Right ventricle myocardium inferior (tissue), 1 donor: ENCODE measurements at regions of chr1 and their contacts with region 1.

Region 1: GRCh38 chr1:147172168-147172992 is at the start of gene PRKAB2:
- DNase-seq: peak; percentile 98
- ATAC-seq: peak; percentile 98
- total RNA-seq, gene PRKAB2: 42.0 TPM

Region 2: GRCh38 chr1:147225193-147225730 is 52.9 kb after region 1 on chr1 and contains the start of gene FMO5:
- intact Hi-C with region 1: loop called (anchors 5 kb)
- DNase-seq: peak; percentile 77
- ATAC-seq: peak; percentile 97
- total RNA-seq, gene FMO5: 8.2 TPM

Region 3: DNA sequence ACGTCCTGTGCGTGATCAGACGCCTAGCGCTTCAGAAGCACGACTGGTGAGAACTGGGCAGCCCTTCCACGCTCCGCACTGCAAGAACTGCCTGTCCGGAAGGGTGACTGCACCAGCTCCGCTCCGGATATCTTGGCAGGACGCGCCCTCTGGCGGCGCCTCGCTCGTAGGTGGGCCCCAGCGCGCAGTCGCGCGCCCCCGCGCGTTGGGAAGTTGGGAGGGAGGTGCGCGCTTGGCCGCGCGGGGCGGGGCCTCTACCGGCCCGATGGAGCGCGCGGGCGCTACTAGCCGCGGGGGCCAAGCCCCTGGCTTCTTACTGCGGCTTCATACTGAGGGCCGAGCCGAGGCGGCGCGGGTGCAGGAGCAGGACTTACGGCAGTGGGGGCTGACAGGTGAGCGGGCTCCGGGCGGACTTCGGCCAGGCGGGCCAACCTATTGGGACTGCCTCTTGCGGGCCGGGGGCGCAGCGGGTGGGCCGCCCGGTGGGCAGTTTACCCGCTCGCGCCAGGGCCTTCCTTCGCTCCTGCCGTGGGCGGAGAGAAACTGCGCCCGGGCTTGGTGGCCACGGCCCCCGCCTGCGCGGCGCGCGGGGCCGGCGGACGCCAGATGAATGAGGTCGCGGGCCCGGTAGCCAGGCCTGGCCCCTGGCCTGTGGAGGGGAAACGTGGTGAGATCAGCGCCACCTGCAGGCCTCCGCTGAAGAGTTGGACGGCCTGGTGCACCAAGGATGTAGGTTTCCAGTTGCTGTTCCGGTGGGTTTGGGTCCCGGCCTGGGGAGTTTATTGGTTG is 70.3 kb after region 1 on chr1 and contains the start of gene CHD1L:
- intact Hi-C with region 1: loop called (anchors 1 kb)
- DNase-seq: peak; percentile 99
- ATAC-seq: peak; percentile 99
- total RNA-seq, gene CHD1L: 8.3 TPM